Thyroid gland (tissue), 4 donors: ENCODE measurements at regions of chr2 and their contacts with region 1.

Region 1: DNA sequence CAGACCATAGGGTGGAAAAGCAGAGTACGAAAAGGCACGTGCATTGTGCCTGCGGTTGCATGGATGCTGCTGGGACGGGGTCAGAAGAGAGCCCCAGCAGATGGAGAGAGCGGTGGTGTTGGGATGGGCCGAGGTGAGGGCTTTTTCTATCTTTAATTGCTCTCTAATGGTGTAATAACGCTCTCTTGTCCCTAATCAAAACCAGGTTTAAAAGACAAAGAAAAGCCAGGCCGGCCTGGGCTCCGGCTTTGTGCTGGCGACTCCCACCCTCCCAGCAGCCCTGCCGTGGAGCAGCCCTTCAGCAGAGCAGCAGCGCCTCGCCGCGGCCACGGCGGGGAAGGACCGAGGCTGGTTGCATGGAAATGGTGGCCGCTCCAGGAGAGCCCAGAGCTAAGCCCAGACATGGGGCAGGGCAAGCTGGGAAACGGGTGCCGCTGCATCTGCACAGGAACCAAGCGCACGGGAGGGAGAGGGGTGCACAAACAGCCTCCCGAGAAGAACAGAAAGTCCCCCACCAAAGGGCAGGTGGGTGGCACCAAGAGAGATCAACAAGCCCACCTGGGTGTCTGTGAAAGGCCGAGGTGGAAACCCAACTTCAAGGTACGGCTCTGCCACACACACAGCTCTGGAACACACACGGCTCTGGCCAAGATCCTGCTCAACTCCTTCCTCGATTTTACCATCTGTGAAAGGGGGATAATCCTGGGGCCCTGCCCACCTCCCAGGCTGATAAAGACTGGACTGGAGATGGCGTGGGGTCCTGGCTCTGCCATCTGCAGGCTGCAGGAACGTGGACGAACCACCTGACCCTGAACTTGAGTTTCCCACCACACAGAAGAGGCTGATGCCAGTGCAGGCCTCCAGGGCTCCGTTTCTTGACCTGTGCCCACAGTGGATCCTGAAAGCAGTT is 15.0 kb downstream of the HS1BP3 start:
- DNase-seq: peak; percentile 85 to 92
- H3K4me3 ChIP-seq: no peak overlapping the region
- H3K27ac ChIP-seq: peak overlapping the region; percentile 82 to 96 (median 88)
- H3K4me1 ChIP-seq: peaks cover 32 to 58% of the 10 kb centered on the region in 2 donors
- H3K27me3 ChIP-seq: no peaks in the 10 kb centered on the region
- CTCF ChIP-seq: peak; percentile 89 to 98 (median 94)
- POLR2A ChIP-seq: no peak

Region 2: DNA sequence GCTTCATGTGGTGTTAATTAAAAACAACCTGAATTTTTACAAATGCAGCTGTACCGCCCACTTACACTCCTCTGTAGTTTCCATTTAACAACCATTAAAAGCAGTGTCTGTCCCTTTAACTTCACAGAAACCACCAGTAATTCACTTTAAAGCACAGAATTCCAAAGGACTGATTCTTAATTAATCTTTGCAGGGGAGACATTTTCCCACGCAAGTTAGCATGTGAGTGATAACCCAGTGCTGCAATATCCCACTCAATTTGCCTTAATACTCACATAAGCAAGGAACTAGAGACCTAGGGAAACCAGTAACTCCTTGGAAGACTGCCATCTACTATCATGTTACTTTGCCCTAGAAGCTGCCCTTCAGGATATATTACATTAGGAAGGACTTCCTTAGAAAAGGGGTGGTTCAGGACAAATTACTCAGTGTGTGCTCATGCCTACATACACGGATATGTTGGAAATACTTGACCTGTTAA is 1379.8 kb before region 1 on chr2:
- intact Hi-C with region 1: no loop called
- DNase-seq: no peak
- H3K4me3 ChIP-seq: no peak overlapping the region
- H3K27ac ChIP-seq: no peak overlapping the region
- H3K4me1 ChIP-seq: no peaks in the 10 kb centered on the region
- H3K27me3 ChIP-seq: no peaks in the 10 kb centered on the region
- CTCF ChIP-seq: no peak
- POLR2A ChIP-seq: no peak

Region 3: GRCh38 chr2:20525041-20526035 is 110.6 kb before region 1 on chr2:
- intact Hi-C with region 1: loop called (anchors 10 kb)
- DNase-seq: peak; percentile 92 to 94
- H3K4me3 ChIP-seq: no peak overlapping the region
- H3K27ac ChIP-seq: peak overlapping the region; percentile 67 to 91 (median 76)
- H3K4me1 ChIP-seq: peaks cover 17 to 46% of the 10 kb centered on the region in 2 donors
- H3K27me3 ChIP-seq: no peaks in the 10 kb centered on the region
- CTCF ChIP-seq: peak in 4 of 6 experiments; percentile 23 to 47 (median 34)
- POLR2A ChIP-seq: no peak

Region 4: GRCh38 chr2:20953145-20953824 is 317.4 kb after region 1 on chr2:
- intact Hi-C with region 1: no loop called
- DNase-seq: no peak
- H3K4me3 ChIP-seq: no peak overlapping the region
- H3K27ac ChIP-seq: no peak overlapping the region
- H3K4me1 ChIP-seq: no peaks in the 10 kb centered on the region
- H3K27me3 ChIP-seq: no peaks in the 10 kb centered on the region
- CTCF ChIP-seq: no peak
- POLR2A ChIP-seq: no peak